ENCODE measurements at regions of chr2 and their contacts with region 1.

Region 1: GRCh38 chr2:218898109-218898878 is 17.6 kb downstream of the WNT10A start:
- DNase-seq: peak; percentile 94
- H3K4me3 Mint-ChIP-seq: peak overlapping the region; percentile 76
- H3K27ac Mint-ChIP-seq: peak overlapping the region; percentile 83
- H3K4me1 Mint-ChIP-seq: peaks cover 42% of the 10 kb centered on the region
- H3K27me3 Mint-ChIP-seq: peaks cover 61% of the 10 kb centered on the region

Region 2: DNA sequence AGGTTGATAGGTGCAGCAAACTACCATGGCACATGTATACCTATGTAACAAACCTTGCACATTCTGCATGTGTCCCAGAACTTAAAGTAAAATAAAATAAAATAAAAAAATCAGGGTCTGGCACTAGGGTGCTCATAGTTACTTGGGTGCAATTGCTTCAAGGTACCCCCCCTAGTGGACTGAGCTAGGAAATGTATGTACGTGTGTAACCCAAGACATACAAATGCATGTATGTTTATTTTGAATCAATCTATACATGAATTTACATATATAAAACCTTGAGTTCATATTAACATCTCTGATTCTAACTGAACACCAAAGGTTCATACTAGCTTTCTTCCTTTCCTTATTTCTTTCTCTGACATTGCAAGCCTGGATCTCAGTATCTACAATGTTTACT is 381.7 kb before region 1 on chr2:
- intact Hi-C with region 1: no loop called
- DNase-seq: peak; percentile 64
- H3K4me3 Mint-ChIP-seq: no peak overlapping the region
- H3K27ac Mint-ChIP-seq: no peak overlapping the region
- H3K4me1 Mint-ChIP-seq: peaks cover 32% of the 10 kb centered on the region
- H3K27me3 Mint-ChIP-seq: no peaks in the 10 kb centered on the region

Region 3: GRCh38 chr2:218659258-218659987 is 238.9 kb before region 1 on chr2 and contains the starts of genes BCS1L and ZNF142:
- intact Hi-C with region 1: loop called (anchors 5 kb)
- DNase-seq: peak; percentile 98
- H3K4me3 Mint-ChIP-seq: peak within 1 kb of the TSS; percentile 98
- H3K27ac Mint-ChIP-seq: peak within 1 kb of the TSS; percentile 95
- H3K4me1 Mint-ChIP-seq: peaks cover 31% of the 10 kb centered on the region
- H3K27me3 Mint-ChIP-seq: no peaks in the 10 kb centered on the region
- total RNA-seq, gene BCS1L: 92.9 and 94.4 TPM in 2 replicates
- total RNA-seq, gene ZNF142: 59.6 and 60.9 TPM in 2 replicates

Region 4: GRCh38 chr2:218710687-218711549 is 187.4 kb before region 1 on chr2 and contains the start of gene TTLL4:
- intact Hi-C with region 1: loop called (anchors 1 kb)
- DNase-seq: peak; percentile 100
- H3K4me3 Mint-ChIP-seq: peak within 1 kb of the TSS; percentile 94
- H3K27ac Mint-ChIP-seq: peak within 1 kb of the TSS; percentile 85
- H3K4me1 Mint-ChIP-seq: peaks cover 18% of the 10 kb centered on the region
- H3K27me3 Mint-ChIP-seq: peaks cover 3% of the 10 kb centered on the region
- total RNA-seq, gene TTLL4: 66.1 and 71.2 TPM in 2 replicates

Region 5: GRCh38 chr2:218852911-218853667 is 45.2 kb before region 1 on chr2:
- intact Hi-C with region 1: loop called (anchors 1 kb)
- DNase-seq: peak; percentile 86
- H3K4me3 Mint-ChIP-seq: no peak overlapping the region
- H3K27ac Mint-ChIP-seq: no peak overlapping the region
- H3K4me1 Mint-ChIP-seq: peaks cover 4% of the 10 kb centered on the region
- H3K27me3 Mint-ChIP-seq: peaks cover 60% of the 10 kb centered on the region

Region 6: DNA sequence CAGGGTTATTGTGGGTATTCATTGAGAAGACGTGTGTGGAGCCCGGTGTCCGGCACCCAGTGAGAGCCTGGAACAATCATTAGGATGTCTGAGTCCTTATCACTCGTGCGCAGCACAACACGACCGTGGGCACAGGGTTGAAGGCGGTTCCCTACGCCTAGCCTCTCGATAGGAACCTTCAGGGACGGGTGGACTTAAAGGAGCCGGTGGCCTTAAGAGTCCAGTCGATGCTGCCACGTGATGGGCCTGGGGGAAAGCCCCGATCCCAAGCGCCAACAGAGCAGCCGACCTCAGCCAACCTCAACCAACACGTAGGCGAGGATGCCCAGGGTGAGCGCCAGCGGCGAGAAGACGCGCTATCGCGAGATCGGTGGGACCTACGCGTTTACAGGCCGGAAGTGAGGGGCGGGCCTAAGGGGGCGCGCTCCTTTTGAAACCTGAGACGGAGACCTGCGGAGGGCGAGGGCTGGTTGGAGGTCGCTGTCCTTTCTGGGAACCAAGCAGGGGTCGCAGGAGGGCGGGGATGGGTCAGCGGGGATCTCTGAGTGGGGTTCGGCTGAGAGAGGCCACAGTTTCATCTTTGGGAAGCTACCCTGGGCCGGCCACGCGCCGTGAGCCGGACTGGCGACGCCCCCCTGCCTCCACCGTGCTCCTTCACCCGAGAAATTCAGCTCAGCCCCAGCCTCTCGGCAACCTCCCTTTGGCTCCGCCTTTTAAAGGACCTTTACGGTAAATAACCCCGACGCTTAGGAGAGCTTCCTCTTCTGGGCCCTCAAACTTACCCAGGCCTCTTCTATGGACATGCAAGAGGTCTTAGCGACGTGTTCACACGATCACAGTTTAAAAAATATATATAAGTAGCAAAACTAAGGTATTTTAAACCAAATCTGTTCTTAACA is 10.7 kb after region 1 on chr2:
- intact Hi-C with region 1: loop called (anchors 1 kb)
- DNase-seq: peak; percentile 96
- H3K4me3 Mint-ChIP-seq: peak overlapping the region; percentile 82
- H3K27ac Mint-ChIP-seq: peak overlapping the region; percentile 83
- H3K4me1 Mint-ChIP-seq: peaks cover 6% of the 10 kb centered on the region
- H3K27me3 Mint-ChIP-seq: peaks cover 34% of the 10 kb centered on the region

Region 7: DNA sequence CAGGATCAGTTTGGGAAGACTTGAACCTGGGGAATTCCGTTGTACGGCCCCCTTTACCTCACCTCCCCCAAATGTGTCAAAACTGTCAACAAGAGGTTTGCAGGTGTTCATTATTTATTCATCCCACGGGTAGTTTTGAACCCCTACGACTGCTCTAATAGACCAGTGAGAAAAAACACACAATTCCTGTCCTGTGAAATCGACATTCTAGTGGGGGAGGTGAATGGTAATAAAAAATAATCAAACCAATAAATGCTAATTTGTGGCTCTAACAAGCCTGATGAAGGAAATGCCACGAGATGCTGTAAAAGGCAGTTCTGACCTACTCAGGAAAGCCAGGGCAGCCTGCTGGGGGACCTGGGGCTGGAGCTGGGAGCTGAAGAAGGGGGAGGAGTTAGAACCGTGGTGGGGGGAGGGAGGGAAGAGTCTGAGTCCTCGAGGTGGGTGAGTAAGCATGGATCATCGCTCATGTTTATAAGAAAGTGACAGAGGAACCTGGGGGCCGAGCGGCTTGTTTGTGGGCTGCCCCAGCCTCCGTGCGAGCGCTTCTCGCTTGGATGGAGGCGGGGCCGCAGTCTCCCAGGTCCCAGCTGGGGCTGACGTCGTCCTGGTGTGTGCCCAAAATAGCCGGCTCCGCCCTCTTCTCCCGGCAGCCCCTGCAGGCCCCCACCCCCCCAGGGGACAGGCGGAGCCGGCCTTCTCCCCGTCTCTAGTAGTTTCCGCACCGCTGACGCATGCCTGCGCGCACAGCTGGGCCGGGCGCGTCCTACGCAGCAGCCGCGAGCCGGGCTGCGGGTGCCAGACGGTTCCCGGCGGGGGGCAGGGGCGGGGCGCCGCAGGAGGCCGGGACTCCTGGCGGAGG is 380.6 kb after region 1 on chr2 and contains the start of gene DNAJB2:
- intact Hi-C with region 1: loop called (anchors 5 kb)
- DNase-seq: peak; percentile 100
- H3K4me3 Mint-ChIP-seq: peak within 1 kb of the TSS; percentile 97
- H3K27ac Mint-ChIP-seq: peak within 1 kb of the TSS; percentile 96
- H3K4me1 Mint-ChIP-seq: peaks cover 42% of the 10 kb centered on the region
- H3K27me3 Mint-ChIP-seq: no peaks in the 10 kb centered on the region
- total RNA-seq, gene DNAJB2: 49.7 and 52.4 TPM in 2 replicates